HEK293 (cell line): ENCODE measurements at regions of chr11 and their contacts with region 1.

Region 1: GRCh38 chr11:117143871-117144476 is at the start of gene PAFAH1B2:
- H3K4me3 ChIP-seq: peak within 1 kb of the TSS; percentile 94
- H3K27ac ChIP-seq: peak within 1 kb of the TSS; percentile 82
- H3K4me1 ChIP-seq: no peaks in the 10 kb centered on the region
- CTCF ChIP-seq: no peak

Region 2: GRCh38 chr11:117171404-117172061 is 27.6 kb after region 1 on chr11:
- CTCF ChIA-PET with region 1: interaction called, 12 read pairs
- POLR2A ChIA-PET with region 1: interaction called, 7 read pairs
- H3K4me3 ChIP-seq: no peak overlapping the region
- H3K27ac ChIP-seq: no peak overlapping the region
- H3K4me1 ChIP-seq: no peaks in the 10 kb centered on the region
- CTCF ChIP-seq: no peak

Region 3: GRCh38 chr11:117273550-117274289 is 129.7 kb after region 1 on chr11:
- CTCF ChIA-PET with region 1: no interaction called
- POLR2A ChIA-PET with region 1: no interaction called
- H3K4me3 ChIP-seq: no peak overlapping the region
- H3K27ac ChIP-seq: no peak overlapping the region
- H3K4me1 ChIP-seq: no peaks in the 10 kb centered on the region
- CTCF ChIP-seq: no peak